ENCODE measurements at regions of chr7 and their contacts with region 1.

Region 1: GRCh38 chr7:87797798-87798403 is 78.3 kb downstream of the SLC25A40 start:
- DNase-seq: no peak
- H3K4me3 ChIP-seq: no peak overlapping the region
- H3K27ac ChIP-seq: no peak overlapping the region
- H3K4me1 ChIP-seq: no peaks in the 10 kb centered on the region
- H3K27me3 ChIP-seq: no peaks in the 10 kb centered on the region
- CTCF ChIP-seq: peak; percentile 5 to 45 (median 43)
- EP300 ChIP-seq: no peak
- POLR2A ChIP-seq: no peak

Region 2: GRCh38 chr7:87818336-87818735 is 20.4 kb after region 1 on chr7:
- intact Hi-C with region 1: no loop called
- DNase-seq: no peak
- H3K4me3 ChIP-seq: no peak overlapping the region
- H3K27ac ChIP-seq: no peak overlapping the region
- H3K4me1 ChIP-seq: no peaks in the 10 kb centered on the region
- H3K27me3 ChIP-seq: no peaks in the 10 kb centered on the region
- CTCF ChIP-seq: no peak
- EP300 ChIP-seq: no peak
- POLR2A ChIP-seq: no peak

Region 3: DNA sequence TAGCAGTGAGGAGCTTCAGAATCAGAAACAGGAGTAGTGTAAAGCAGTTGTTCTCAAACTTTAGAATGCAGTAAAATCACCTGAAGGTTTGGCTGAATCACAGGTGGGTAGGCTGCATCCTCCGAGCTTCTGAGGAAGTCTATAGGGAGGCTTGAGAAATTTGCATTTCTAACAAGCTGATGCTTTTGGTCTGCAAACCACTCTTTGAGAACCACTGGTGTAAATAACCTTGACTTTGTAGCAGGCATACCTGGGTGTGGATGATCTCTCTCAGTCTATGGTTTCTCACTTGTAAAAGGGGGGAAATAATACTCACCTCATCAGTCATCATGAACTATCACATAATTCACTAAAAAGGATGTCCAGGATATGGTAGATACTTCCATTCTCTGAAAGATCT is 303.9 kb after region 1 on chr7:
- intact Hi-C with region 1: loop called in 1 of 4 experiments (anchors 10 kb)
- DNase-seq: no peak
- H3K4me3 ChIP-seq: no peak overlapping the region
- H3K27ac ChIP-seq: no peak overlapping the region
- H3K4me1 ChIP-seq: no peaks in the 10 kb centered on the region
- H3K27me3 ChIP-seq: no peaks in the 10 kb centered on the region
- CTCF ChIP-seq: no peak
- EP300 ChIP-seq: no peak
- POLR2A ChIP-seq: no peak

Region 4: DNA sequence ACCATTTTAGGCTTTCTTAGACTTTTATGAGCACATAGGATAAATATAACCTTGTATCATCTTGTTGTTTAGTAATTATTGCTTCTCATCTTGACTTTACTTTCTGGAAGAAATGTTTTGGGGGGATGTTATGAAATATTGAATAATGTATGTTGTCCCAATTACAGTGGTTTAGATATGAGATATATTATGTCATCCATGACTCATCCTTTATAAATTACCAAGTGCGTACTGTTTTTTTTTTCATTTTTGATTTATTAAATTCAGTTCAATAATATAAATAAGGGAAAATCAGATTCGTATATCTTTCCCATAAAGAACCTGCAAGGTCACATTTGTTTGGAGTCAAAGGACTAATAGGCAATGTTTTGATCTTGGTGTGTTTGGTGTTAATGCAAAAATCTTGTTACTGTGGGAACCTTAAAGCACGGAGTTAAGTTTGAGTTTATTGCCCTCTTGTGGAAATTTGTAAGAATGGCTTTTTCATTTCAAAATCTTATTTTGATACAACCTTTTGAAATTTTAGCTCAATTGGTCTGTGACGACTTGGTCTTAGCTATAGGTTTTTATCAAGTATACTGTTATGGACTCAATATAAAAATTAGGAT is 313.3 kb after region 1 on chr7:
- intact Hi-C with region 1: loop called in 2 of 4 experiments (anchors 10 kb)
- DNase-seq: no peak
- H3K4me3 ChIP-seq: no peak overlapping the region
- H3K27ac ChIP-seq: no peak overlapping the region
- H3K4me1 ChIP-seq: no peaks in the 10 kb centered on the region
- H3K27me3 ChIP-seq: no peaks in the 10 kb centered on the region
- CTCF ChIP-seq: peak; percentile 21 to 42 (median 26)
- EP300 ChIP-seq: no peak
- POLR2A ChIP-seq: no peak

Measured in ovary (tissue), 10 donors.